HCT116 (cell line): ENCODE measurements at regions of chrX and their contacts with region 1.

Region 1: DNA sequence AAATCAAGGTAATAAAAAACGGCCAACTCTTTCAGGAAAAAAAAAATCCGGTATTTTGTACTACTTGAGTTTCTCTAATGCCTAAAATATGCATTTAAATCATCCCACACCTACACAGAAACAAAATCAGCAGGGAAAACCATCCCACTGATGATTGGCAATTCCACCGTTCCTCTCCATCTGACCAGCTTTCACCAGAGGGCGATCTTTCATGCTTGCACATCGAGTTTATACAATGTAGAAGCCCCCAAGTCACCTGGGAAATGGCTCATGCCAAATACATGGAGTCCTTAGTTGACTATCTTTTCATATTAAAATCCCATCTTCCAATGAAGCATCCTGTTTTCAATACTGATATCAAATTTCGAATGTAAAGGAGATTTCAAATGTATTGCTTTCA is 69.2 kb downstream of the PTCHD1 start:
- DNase-seq: peak; percentile 6
- ATAC-seq: peak; percentile 53
- H3K4me3 ChIP-seq: no peak overlapping the region
- H3K27ac ChIP-seq: no peak overlapping the region
- H3K4me1 ChIP-seq: no peaks in the 10 kb centered on the region
- H3K27me3 ChIP-seq: no peaks in the 10 kb centered on the region
- CTCF ChIP-seq: peak; percentile 20 to 40 (median 23); a peak in 3 of 6 replicates
- POLR2A ChIP-seq: no peak
- RAD21 ChIP-seq: peak; percentile 47

Region 2: GRCh38 chrX:23317799-23318724 is 85.8 kb before region 1 on chrX:
- CTCF ChIA-PET with region 1: no interaction called
- POLR2A ChIA-PET with region 1: no interaction called
- RAD21 ChIA-PET with region 1: no interaction called
- intact Hi-C with region 1: no loop called
- DNase-seq: no peak
- ATAC-seq: peak; percentile 86
- H3K4me3 ChIP-seq: no peak overlapping the region
- H3K27ac ChIP-seq: no peak overlapping the region
- H3K4me1 ChIP-seq: no peaks in the 10 kb centered on the region
- H3K27me3 ChIP-seq: no peaks in the 10 kb centered on the region
- CTCF ChIP-seq: peak; percentile 39 to 84 (median 73); a peak in 5 of 6 replicates
- POLR2A ChIP-seq: no peak
- RAD21 ChIP-seq: peak; percentile 59

Region 3: DNA sequence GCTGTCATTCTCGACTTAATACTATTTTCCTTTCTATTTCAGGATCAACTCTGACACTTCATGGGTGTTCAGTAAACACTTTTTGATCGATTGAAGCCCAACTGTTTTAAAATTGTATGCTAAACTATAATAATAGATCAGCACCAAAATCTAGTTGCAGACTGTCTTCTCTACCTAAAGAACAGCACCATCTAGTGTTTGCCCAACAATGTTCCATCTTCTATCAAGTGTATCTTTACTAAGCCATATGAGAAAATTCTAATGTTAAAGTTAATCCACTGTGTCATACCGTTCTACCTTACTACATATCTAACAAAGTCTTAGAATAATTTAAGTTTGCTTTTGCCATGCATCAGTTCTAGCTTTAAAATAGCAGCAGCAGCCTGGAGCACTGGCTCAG is 150.5 kb after region 1 on chrX:
- CTCF ChIA-PET with region 1: no interaction called
- POLR2A ChIA-PET with region 1: no interaction called
- RAD21 ChIA-PET with region 1: no interaction called
- intact Hi-C with region 1: loop called (anchors 1 kb)
- DNase-seq: peak; percentile 22
- ATAC-seq: peak; percentile 53; the same call in 1 of the 2 replicates
- H3K4me3 ChIP-seq: no peak overlapping the region
- H3K27ac ChIP-seq: no peak overlapping the region
- H3K4me1 ChIP-seq: no peaks in the 10 kb centered on the region
- H3K27me3 ChIP-seq: peaks cover 7% of the 10 kb centered on the region
- CTCF ChIP-seq: peak; percentile 30 to 58 (median 33); a peak in 5 of 6 replicates
- POLR2A ChIP-seq: no peak
- RAD21 ChIP-seq: peak; percentile 69